ENCODE measurements at regions of chr13 and their contacts with region 1.

Region 1: GRCh38 chr13:21018220-21018619 is 43.2 kb downstream of the LATS2 start:
- DNase-seq: no peak
- H3K4me3 ChIP-seq: no peak overlapping the region
- H3K27ac ChIP-seq: no peak overlapping the region
- H3K4me1 ChIP-seq: peaks cover 0 to 28% (median 18%) of the 10 kb centered on the region in 4 experiments
- H3K27me3 ChIP-seq: no peaks in the 10 kb centered on the region

Region 2: DNA sequence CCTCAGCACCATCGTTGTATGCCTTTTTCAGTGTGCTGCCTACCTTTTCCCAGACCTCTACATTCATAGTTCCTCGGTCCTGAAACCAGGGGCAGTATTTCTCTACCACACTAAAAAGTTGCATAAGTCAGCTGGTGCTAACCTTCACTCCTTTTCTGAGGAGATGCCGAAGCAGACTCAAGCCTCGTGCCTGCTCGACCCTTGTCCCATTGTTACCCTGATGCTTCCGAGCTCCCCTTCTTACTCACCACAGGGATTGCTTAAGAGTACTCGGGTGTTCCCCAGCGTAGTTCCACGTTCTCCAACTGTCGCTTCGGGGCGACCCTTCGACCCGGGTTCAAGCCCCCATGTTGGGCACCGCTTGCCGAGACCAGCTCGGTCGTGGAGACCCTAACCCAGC is 333.7 kb before region 1 on chr13:
- CTCF ChIA-PET with region 1: no interaction called
- POLR2A ChIA-PET with region 1: no interaction called
- DNase-seq: no peak
- H3K4me3 ChIP-seq: no peak overlapping the region
- H3K27ac ChIP-seq: no peak overlapping the region
- H3K4me1 ChIP-seq: no peaks in the 10 kb centered on the region
- H3K27me3 ChIP-seq: no peaks in the 10 kb centered on the region

Region 3: GRCh38 chr13:21034603-21035191 is 16.5 kb after region 1 on chr13:
- CTCF ChIA-PET with region 1: interaction called, 25 read pairs
- POLR2A ChIA-PET with region 1: interaction called, 5 read pairs
- DNase-seq: peak; percentile 37 to 53 (median 40)
- H3K4me3 ChIP-seq: peak overlapping the region in 2 of 7 experiments; percentile 2 to 16
- H3K27ac ChIP-seq: peak overlapping the region in 1 of 2 experiments; percentile 49
- H3K4me1 ChIP-seq: peaks cover 12 to 65% (median 53%) of the 10 kb centered on the region in 4 experiments
- H3K27me3 ChIP-seq: no peaks in the 10 kb centered on the region

Measured in common myeloid progenitor, CD34-positive (primary cell).